ENCODE measurements at regions of chr11 and their contacts with region 1.

Region 1: DNA sequence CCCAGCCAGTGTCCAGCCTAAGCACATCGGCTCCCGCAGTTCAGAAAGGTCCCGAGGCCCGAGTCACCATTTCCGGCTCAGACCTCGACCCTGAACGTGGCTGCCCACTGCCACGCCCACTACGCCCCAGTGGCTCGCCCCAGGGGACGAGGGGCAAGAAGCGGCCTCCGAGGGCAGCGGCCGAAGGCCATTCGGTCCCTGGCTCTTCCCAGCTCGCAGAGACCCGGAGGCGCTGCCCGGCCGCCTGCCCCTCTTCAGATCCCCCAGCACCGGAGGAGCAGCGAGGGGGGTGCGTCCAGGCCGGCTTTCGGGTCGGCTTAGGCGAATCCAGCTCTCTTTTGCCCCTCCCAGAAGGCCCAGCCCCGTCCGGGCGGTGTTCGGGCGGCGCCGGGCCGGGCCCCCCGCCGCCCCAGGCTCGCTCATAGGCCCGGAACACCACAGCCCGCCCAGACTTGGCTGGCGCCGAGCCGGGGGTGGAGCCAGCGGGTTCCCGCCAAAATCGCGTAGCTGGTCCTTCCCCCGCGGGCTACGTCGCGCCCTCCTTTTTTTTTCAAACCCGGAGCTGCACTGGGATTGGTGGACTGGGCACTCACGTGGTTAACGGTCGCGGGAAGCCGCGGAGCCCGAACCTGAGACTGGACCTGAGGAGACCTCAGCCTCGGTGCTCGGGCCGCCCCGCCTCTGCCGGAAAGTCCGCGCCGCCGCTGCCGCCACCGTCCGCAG is at the start of gene WEE1:
- DNase-seq: peak; percentile 100
- H3K4me3 Mint-ChIP-seq: peak within 1 kb of the TSS; percentile 96
- H3K27ac Mint-ChIP-seq: peak within 1 kb of the TSS; percentile 93
- H3K4me1 Mint-ChIP-seq: peaks cover 30% of the 10 kb centered on the region
- H3K27me3 Mint-ChIP-seq: peaks cover 6% of the 10 kb centered on the region
- total RNA-seq, gene WEE1: 55.5 and 57.7 TPM in 2 replicates

Region 2: DNA sequence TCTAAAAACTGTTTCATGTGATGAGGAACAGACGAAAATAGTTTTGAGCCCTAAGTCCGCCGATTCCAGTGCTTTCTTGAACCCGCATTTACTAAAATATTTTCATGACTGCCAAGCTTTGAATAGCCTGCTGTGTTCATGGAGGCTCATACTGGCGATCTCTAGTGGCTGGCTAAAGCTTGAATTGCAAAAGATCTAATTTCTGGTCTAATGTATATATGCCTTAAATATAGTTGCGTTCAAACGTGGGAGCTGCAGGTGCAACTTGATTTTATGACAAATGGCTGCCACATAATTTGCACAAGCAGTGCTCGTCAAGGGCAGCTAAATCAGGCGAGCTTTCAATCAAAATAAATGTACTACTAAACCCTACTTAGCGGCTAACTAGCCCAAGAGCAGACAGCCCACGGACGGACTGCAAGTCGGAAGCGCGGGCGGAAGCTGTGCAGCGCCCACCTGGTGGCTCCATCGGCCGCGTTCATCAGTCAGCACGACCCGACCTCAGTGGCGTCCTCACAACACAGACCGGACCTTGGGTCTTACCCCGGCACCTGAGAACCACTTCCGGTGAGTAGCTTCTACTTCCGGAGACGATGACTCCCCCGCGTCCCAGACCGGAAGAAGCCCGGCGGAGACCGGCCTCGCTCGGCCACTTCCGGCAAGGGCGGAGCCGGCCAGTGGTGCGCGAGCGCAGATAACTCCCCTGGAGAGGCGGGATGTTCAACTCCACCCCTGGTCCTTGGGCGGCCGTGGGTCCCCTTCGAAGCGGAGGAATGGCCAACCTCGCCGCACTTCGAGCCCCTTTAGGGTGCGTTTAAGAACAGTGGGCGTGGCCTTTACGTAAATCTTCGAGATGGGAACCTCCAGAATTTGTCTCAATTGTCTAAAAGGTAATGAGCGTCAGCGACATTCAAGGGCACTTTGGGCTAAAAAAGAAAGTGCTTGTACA is 884.5 kb before region 1 on chr11:
- intact Hi-C with region 1: loop called (anchors 10 kb)
- DNase-seq: peak; percentile 96
- H3K4me3 Mint-ChIP-seq: peak overlapping the region; percentile 94
- H3K27ac Mint-ChIP-seq: peak overlapping the region; percentile 88
- H3K4me1 Mint-ChIP-seq: peaks cover 43% of the 10 kb centered on the region
- H3K27me3 Mint-ChIP-seq: no peaks in the 10 kb centered on the region

Region 3: DNA sequence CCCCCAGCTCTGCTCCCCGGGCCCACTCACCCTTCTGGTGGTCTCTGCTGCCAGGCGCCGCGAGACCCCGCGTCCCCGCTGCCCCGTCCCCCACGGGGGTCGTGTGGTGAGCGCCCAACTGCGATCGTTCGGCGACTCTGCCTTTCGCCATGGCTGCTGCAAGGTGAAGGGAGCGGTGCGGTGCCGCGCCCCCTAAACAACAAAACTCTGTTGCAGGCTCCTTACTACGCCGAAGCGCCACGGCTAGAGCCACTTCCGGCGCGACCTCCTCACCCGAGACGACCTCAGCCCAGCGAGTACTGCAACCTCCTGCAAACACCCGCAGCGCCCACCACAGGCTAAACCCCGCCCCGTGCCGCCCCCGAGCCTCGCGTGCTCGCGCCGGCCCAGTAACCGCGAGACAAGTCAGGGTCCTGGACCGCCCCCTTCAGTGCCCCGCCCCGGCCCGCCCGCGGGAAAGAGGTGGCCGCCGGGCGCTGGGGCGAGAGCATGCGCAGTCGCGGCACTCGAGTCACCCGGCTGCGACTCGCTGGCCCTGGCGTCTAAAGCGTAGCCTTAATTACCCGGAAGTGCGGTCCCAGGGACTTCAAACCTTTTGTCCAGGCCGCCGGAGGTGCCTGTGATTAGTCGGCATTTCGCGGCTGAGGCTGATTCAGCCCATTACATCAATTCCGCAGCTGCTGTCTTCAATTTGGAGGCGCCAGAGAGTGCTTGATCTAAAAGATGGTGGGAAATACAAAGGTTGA is 258.7 kb before region 1 on chr11 and contains the start of gene TMEM41B:
- intact Hi-C with region 1: loop called (anchors 1 kb)
- DNase-seq: peak; percentile 100
- H3K4me3 Mint-ChIP-seq: peak within 1 kb of the TSS; percentile 99
- H3K27ac Mint-ChIP-seq: peak within 1 kb of the TSS; percentile 97
- H3K4me1 Mint-ChIP-seq: peaks cover 38% of the 10 kb centered on the region
- H3K27me3 Mint-ChIP-seq: peaks cover 23% of the 10 kb centered on the region
- total RNA-seq, gene TMEM41B: 26.5 and 30.5 TPM in 2 replicates

Region 4: GRCh38 chr11:9384535-9385303 is 188.5 kb before region 1 on chr11 and contains the start of gene IPO7:
- intact Hi-C with region 1: loop called (anchors 10 kb)
- DNase-seq: peak; percentile 97
- H3K4me3 Mint-ChIP-seq: peak within 1 kb of the TSS; percentile 95
- H3K27ac Mint-ChIP-seq: peak within 1 kb of the TSS; percentile 94
- H3K4me1 Mint-ChIP-seq: peaks cover 21% of the 10 kb centered on the region
- H3K27me3 Mint-ChIP-seq: no peaks in the 10 kb centered on the region
- total RNA-seq, gene IPO7: 177 and 200 TPM in 2 replicates

Region 5: DNA sequence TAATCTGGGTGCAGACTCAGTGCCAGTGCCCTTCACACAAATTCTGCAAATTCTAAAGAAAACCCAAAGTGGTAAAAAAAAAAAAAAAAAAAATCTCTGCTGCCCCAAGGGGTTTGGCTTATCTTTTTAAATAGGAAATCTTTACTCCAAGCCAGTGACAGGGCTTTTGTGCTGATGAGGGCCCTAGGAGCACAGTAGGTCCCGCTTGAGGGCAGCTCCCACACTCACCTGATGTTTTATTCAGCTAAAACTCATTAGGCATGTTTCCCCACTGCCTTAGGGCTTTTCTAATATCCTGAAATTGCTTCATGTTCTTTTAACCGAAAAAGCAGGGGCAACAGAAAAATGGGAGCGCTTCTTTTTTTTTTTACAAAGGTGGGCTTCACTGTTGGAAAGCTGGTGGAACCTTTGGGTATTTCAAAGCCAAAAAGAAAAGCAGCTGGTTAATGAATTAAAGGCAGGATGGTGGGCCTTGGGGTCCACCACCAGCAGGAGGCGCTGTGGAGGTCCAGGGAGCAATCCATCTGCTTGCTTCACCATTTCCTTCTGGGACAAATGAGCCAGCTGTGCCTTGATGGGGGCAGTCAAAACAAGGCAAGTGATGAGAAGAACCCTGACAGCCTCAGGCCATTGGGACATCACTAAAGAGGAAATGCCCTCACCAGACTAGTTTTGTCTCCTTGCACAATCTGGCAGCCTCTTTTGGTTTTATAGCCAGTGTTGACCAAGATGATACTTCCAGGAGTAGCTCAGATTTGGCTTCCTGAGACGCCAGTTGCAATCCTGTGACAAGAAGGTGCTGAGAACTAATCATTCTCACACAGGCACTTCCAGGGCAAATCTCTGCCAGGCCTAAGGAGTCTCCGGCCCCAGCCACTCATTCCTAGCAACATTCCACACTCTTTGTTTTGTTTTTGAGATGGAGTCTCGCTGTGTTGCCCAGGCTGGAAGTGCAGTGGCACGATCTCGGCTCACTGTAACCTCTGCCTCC is 38.1 kb before region 1 on chr11:
- intact Hi-C with region 1: loop called (anchors 2 kb)
- DNase-seq: peak; percentile 93
- H3K4me3 Mint-ChIP-seq: no peak overlapping the region
- H3K27ac Mint-ChIP-seq: no peak overlapping the region
- H3K4me1 Mint-ChIP-seq: no peaks in the 10 kb centered on the region
- H3K27me3 Mint-ChIP-seq: no peaks in the 10 kb centered on the region

Region 6: DNA sequence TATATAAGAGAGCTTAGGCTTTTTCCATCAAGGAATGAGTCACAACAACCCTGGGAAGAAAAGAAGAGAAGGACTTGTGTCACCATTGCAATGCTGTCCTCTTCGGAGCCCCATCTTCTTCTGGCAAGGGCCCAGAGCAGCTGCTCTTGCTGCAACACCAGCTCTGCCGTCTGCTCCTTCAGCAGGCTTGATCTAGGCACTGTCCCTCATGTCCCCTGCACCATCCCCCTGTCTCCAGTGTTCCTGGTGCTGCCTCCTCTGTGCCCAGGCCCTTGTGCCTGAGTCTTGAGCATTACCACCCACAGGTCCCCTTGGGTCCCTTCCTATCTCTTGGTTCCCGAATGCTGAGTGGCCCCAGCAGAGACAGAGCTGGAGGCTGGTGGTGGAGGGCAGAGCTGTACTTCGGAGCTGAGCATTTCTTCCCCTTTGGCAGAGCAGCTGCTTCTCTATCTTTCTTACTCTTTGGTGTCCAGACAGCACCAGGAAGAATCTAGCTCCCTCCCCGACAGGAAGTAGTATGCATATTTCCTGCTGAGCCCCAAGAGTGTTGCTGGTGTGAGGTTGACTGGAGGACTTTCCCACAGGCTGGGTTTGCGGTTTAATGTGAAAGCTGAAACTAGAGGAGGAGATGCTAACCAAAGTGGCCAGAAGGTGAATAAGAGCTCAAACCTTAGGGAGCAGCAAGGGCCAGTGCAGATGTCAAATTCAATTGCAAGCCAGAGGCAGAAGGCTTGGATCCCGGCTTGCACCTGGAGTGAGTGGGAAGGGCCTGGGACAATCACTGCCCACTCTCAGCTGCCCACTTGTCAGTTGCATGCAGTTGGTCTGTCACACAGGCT is 28.0 kb after region 1 on chr11:
- intact Hi-C with region 1: loop called (anchors 1 kb)
- DNase-seq: peak; percentile 92
- H3K4me3 Mint-ChIP-seq: peak overlapping the region; percentile 83
- H3K27ac Mint-ChIP-seq: peak overlapping the region; percentile 88
- H3K4me1 Mint-ChIP-seq: peaks cover 30% of the 10 kb centered on the region
- H3K27me3 Mint-ChIP-seq: peaks cover 7% of the 10 kb centered on the region

Region 7: DNA sequence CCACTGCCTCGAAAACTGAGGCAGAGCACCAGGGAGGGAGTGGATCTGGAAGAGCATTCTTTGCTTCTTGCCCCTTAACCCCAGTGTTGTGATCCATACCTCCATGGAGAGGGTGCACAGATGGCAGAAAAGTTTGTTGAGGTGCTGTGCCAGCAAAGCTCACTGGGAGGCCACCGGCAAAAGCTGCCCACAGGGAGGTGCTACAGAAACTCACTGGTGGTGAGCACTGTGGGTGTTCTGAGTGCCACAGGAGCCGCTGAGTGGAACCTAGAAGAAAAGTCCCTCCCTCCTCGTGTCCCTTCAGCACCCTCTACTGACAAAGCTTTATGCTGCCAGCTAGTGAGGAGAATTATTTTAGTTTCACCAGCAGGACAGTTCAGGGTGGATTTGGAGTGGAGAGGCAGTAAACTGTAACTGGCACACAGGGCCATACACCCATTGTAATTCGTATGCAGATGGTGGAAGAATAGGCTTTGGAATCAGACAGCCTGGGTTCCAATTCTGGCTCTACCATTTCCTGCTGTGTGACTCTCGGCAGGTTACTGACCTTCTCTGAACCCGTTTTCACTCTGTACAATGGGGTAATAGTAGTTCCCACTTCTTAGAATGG is 175.3 kb after region 1 on chr11:
- intact Hi-C with region 1: loop called (anchors 2 kb)
- DNase-seq: peak; percentile 90
- H3K4me3 Mint-ChIP-seq: no peak overlapping the region
- H3K27ac Mint-ChIP-seq: no peak overlapping the region
- H3K4me1 Mint-ChIP-seq: peaks cover 19% of the 10 kb centered on the region
- H3K27me3 Mint-ChIP-seq: no peaks in the 10 kb centered on the region